ENCODE measurements at regions of chr12 and their contacts with region 1.

Region 1: DNA sequence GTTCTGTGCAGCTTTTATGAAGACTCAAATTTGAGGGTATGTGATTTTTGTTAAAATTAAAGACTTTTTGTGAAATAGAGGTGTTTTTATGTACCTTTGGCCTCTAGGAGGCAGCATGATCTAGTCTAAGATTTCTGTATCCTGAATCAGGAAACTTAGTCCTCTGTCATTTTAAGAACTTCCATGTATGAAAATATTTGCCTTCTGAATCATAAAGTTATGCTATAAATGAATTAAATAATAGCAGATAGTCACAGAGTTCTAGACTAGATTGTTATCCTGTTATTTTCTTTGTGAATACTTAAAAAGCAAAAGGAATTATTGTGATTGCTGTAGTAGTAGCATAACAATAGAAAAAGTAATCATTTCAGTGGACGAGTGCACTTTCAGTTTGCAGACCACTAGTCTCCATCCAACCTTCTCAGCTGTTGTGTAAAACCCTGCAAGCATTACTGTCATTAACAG is 56.3 kb downstream of the FGD4 start:
- DNase-seq: no peak
- H3K4me3 Mint-ChIP-seq: no peak overlapping the region
- H3K27ac Mint-ChIP-seq: no peak overlapping the region
- H3K4me1 Mint-ChIP-seq: no peaks in the 10 kb centered on the region
- H3K27me3 Mint-ChIP-seq: peaks cover 7% of the 10 kb centered on the region

Region 2: DNA sequence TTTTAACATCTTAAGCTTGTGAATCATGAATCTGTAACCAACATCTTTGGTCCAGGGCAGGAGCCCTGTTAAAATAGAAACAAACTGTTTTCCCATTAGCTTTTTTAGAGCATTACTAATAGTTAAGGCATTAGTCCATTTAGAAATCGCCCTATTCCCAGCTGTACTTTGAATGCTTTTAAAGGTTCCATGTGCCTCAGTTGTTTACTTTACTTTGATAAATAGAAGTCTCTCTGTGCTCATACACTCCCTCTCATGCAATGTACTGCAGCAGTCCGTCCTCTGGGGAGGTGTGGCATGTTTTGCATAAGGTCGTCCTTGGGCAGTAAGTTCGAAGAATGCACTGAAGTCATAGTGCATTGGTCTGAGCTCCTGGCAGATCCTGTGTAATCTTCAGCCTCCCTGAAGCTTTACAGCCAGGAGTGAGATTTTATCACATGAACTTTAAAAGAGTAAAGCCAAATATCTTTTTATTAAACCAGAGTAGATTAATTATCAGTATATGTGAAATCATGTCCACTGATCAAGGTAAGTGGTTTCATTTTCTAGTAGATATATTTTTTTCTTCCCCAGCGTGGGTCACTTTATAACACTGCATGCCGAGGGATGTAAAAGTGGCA is 78.4 kb after region 1 on chr12:
- CTCF ChIA-PET with region 1: no interaction called
- POLR2A ChIA-PET with region 1: no interaction called
- DNase-seq: no peak
- H3K4me3 Mint-ChIP-seq: no peak overlapping the region
- H3K27ac Mint-ChIP-seq: no peak overlapping the region
- H3K4me1 Mint-ChIP-seq: no peaks in the 10 kb centered on the region
- H3K27me3 Mint-ChIP-seq: peaks cover 40% of the 10 kb centered on the region

Region 3: GRCh38 chr12:32659908-32660440 is 204.3 kb after region 1 on chr12:
- CTCF ChIA-PET with region 1: interaction called, 15 read pairs
- POLR2A ChIA-PET with region 1: no interaction called
- DNase-seq: no peak
- H3K4me3 Mint-ChIP-seq: no peak overlapping the region
- H3K27ac Mint-ChIP-seq: no peak overlapping the region
- H3K4me1 Mint-ChIP-seq: peaks cover 4% of the 10 kb centered on the region
- H3K27me3 Mint-ChIP-seq: no peaks in the 10 kb centered on the region

Region 4: DNA sequence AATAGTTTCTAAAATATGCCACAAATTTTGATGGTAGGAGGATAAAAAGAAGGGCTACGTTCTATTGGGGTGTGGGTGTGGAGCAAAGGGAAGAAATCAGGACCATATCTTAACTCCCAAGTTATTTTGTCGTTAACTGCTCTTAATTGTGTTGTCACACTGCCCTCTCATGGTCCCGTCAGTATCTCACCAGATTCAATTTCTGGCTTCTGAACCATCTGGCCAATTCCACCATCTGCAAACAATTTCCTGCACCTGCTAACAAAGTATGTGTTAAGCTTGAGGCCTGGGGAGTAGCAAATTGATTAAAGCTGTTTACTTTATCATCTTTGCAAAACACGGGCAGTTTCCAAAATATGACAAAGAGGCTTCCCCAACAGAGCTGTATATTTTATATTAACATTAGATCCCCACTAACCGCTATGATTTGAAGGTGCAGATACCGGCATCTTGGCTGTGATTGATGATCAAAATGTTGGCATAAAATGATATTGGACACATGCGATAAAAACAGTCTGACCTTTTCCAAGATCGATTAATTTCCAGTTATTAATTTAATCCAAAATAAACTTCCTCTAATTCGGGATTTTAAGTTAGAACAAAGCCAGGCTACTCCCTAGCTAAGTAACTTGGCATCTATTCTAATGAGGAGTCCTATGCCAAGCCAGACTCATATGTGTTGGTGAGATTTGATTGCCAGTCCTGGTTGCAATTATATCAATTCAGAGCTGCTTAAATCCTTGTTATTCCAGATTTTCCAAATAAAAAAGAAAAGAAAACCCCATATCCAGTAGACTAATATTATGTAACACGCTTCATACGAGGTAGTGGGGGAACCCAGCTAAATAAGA is 216.5 kb after region 1 on chr12:
- CTCF ChIA-PET with region 1: interaction called, 32 read pairs
- POLR2A ChIA-PET with region 1: no interaction called
- DNase-seq: peak; percentile 21
- H3K4me3 Mint-ChIP-seq: no peak overlapping the region
- H3K27ac Mint-ChIP-seq: no peak overlapping the region
- H3K4me1 Mint-ChIP-seq: no peaks in the 10 kb centered on the region
- H3K27me3 Mint-ChIP-seq: peaks cover 13% of the 10 kb centered on the region

Region 5: DNA sequence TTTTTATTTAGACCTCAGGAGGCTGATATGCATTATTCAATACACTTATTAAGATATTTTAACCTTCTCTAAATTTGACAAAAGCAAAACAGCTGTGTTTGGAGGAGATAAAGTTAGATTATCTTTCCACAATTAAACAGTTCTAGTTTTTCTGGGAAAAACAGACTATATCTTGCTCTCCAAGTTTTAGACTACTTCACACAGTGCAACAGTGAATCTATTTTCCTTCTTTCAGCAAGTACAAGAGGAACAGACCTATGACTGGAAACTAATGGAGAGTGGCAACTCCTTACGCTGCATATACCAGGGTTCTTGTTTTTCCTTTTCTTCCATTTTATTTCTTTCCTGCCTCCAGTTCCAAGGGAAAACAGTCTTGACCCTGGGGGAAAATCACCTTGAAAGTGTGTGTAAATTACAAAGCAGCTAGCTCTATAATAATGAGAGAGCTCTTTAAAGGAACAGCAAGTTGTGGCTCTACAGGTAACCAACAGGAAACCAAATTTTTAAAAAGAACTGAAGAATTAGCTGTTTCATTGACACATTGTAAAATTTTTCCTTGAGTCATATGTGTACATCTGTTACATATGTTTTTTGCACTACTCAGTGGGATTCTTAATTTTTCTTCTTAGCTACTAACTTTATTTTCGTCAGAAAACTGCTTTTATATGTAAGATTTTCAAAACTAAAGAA is 250.8 kb after region 1 on chr12:
- CTCF ChIA-PET with region 1: no interaction called
- POLR2A ChIA-PET with region 1: no interaction called
- DNase-seq: no peak
- H3K4me3 Mint-ChIP-seq: no peak overlapping the region
- H3K27ac Mint-ChIP-seq: peak overlapping the region; percentile 34
- H3K4me1 Mint-ChIP-seq: peaks cover 19% of the 10 kb centered on the region
- H3K27me3 Mint-ChIP-seq: no peaks in the 10 kb centered on the region

Measured in activated CD4-positive, alpha-beta memory T cell treated with anti-CD3 and anti-CD28 coated beads, Interleukin-2, amount 10 ng/mL, durations not matched to agents 7 days and 5 days (primary cell).